ENCODE measurements at regions of chr6 and their contacts with region 1.

Region 1: GRCh38 chr6:27177485-27178406 is 69.8 kb upstream of the PRSS16 start:
- DNase-seq: peak; percentile 73 to 90
- H3K4me3 ChIP-seq: peak overlapping the region; percentile 77 to 96
- H3K27ac ChIP-seq: peak overlapping the region; percentile 82 to 83
- H3K4me1 ChIP-seq: peaks cover 0 to 6% (median 3%) of the 10 kb centered on the region in 4 donors
- H3K27me3 ChIP-seq: no peaks in the 10 kb centered on the region
- CTCF ChIP-seq: peak in 1 of 2 experiments; percentile 52

Region 2: DNA sequence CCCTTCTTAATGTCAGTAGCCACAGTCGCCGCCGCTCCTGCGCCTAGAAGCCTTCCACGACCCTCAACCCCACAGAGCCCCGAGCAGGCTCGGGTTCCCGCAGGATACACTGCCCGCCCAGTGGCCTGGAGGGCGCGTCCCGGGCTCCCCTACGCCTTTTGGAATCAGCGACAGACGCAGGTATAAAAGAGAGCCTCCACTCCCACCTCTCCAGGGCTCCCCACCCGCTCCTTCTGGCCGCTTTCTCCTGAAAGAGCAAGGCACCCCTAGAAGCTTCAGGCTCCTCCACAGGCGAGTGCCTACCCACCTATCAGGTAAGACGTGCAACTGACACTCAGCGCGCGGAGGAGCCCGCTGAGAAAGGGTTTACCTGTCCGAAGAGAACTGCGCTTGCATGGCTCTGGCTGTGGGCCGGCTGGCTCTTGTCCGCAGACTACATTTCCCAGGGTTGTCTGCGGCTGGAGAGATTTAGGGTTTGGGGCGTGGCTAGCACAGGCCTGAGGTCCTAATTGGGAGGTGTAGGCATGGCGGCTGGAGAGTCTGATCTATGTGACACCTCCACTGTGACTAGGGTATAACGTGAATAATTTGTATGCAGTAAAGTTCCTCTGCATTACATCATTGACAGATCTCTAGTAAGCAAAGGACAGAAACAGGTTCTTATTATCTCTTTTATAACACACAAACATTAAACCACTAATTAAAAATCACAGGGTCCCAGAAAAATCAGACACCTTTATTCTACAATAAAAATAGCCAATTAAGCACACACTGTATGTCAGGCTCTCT is 197.3 kb after region 1 on chr6:
- intact Hi-C with region 1: no loop called
- DNase-seq: peak; percentile 62 to 84
- H3K4me3 ChIP-seq: peak overlapping the region; percentile 57 to 82
- H3K27ac ChIP-seq: peak overlapping the region; percentile 54
- H3K4me1 ChIP-seq: peaks cover 0 to 8% (median 3%) of the 10 kb centered on the region in 4 donors
- H3K27me3 ChIP-seq: no peaks in the 10 kb centered on the region
- CTCF ChIP-seq: no peak

Region 3: DNA sequence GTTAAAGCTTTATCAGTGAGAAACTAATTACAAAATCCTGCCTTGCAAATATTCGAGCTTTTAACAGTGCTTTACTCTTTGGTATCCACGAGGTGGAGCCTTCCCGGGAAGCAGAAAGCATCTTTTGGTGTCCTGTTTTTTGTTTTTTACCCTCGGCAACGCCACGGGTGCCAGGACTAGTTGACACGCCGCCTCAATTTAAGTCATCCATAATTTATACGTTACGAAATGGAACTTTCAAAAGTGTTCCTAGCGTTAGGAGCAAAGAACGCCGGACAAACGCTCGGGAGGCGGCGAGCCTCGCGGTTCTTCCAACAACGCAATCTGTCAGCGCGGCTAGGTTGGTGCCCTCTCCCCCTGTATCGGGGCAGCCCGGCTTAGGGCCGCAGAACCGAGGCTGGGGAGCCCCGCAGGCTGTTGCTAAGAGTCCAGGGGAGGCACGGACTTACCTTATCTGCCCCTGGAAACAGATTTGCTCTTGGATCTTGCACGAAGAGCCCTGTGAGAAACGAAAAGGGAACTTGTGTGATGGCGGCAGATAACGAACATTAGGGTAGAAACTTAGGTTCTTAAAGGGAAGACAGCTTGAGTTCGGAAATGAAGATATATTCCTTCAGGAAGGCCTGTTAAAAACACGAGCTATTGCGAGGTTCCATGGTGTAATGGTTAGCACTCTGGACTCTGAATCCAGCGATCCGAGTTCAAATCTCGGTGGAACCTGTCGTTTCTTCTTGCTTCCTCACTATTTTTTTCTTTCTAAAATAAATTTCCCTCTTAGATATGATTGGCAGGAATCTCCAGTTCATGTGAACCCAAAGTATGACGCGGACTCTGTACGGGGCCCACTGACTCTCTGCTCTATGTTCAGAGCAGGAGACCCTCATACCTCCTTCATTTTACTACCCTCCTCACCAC is 341.4 kb after region 1 on chr6:
- intact Hi-C with region 1: loop called (anchors 10 kb)
- DNase-seq: peak; percentile 64 to 76
- H3K4me3 ChIP-seq: peak overlapping the region; percentile 61 to 82
- H3K27ac ChIP-seq: peak overlapping the region; percentile 81 to 95
- H3K4me1 ChIP-seq: peaks cover 0 to 8% (median 6%) of the 10 kb centered on the region in 4 donors
- H3K27me3 ChIP-seq: no peaks in the 10 kb centered on the region
- CTCF ChIP-seq: peak; percentile 58 to 70

Region 4: GRCh38 chr6:27795697-27796494 is 618.1 kb after region 1 on chr6:
- intact Hi-C with region 1: loop called (anchors 5 kb)
- DNase-seq: no peak
- H3K4me3 ChIP-seq: no peak overlapping the region
- H3K27ac ChIP-seq: no peak overlapping the region
- H3K4me1 ChIP-seq: peaks cover 0 to 15% (median 7%) of the 10 kb centered on the region in 4 donors
- H3K27me3 ChIP-seq: no peaks in the 10 kb centered on the region
- CTCF ChIP-seq: peak; percentile 80 to 85

Measured in tibial artery (tissue), 4 donors.